ENCODE measurements at regions of chr2 and their contacts with region 1.

Region 1: GRCh38 chr2:128090945-128091725 is at the start of gene UGGT1:
- DNase-seq: peak; percentile 87 to 98 (median 94)
- ATAC-seq: peak; percentile 97
- H3K4me3 ChIP-seq: peak within 1 kb of the TSS; percentile 86 to 94
- H3K4me3 Mint-ChIP-seq: peak within 1 kb of the TSS; percentile 90
- H3K27ac ChIP-seq: peak within 1 kb of the TSS; percentile 60 to 89
- H3K27ac Mint-ChIP-seq: peak within 1 kb of the TSS; percentile 95
- H3K4me1 ChIP-seq: peaks cover 5% of the 10 kb centered on the region
- H3K4me1 Mint-ChIP-seq: peaks cover 49% of the 10 kb centered on the region
- H3K27me3 ChIP-seq: no peaks in the 10 kb centered on the region
- H3K27me3 Mint-ChIP-seq: no peaks in the 10 kb centered on the region
- CTCF ChIP-seq: no peak
- total RNA-seq, gene UGGT1: 25.6 to 25.9 TPM

Region 2: DNA sequence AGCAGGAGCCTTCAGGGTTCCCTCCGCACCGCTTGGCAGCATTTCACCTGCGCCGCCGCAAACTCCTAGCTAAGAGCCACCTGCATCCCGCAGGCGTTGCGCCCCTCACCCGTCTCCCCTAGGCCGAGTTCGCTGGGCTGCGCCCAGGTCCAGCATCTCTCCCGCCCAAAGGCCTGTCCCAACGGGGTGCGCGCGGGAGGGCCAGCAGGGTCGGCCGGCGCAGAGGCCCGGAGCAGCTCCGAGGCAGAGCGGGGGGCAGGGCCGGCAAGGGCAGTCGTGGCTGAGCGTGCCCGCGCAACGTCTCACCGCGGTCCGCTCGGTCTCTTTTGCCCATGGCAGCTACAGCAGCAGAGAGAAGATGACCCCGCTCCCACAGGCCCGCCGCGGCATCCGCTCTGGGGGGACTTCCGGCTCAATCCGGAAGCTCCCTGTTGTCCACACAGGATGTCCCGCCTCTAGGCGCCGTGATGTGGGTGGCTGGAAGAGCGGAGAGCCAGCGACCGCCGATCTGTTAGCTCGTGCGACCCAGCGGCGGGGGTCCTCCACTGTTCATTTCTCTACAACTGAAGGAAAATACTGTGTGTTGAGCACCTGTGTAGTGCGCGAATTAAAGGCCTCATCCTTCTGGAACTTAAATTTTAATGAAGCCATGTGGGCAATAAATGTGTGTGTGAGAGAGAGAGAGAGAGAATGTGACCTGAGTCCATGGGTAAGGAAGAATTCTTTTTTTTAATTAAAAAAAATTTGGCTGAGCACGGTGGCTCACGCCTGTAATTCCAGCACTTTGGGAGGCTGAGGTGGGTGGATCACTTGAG is 797.2 kb before region 1 on chr2 and contains the start of gene ERCC3:
- CTCF ChIA-PET with region 1: no interaction called
- POLR2A ChIA-PET with region 1: no interaction called
- intact Hi-C with region 1: loop called in 1 of 2 experiments (anchors 1 kb)
- DNase-seq: peak; percentile 56 to 90 (median 83)
- ATAC-seq: peak; percentile 91
- H3K4me3 ChIP-seq: peak within 1 kb of the TSS; percentile 75 to 91
- H3K4me3 Mint-ChIP-seq: peak within 1 kb of the TSS; percentile 94
- H3K27ac ChIP-seq: peak within 1 kb of the TSS; percentile 74 to 76
- H3K27ac Mint-ChIP-seq: peak within 1 kb of the TSS; percentile 91
- H3K4me1 ChIP-seq: peaks cover 13% of the 10 kb centered on the region
- H3K4me1 Mint-ChIP-seq: peaks cover 45% of the 10 kb centered on the region
- H3K27me3 ChIP-seq: no peaks in the 10 kb centered on the region
- H3K27me3 Mint-ChIP-seq: no peaks in the 10 kb centered on the region
- CTCF ChIP-seq: no peak
- total RNA-seq, gene ERCC3: 43.2 to 46.4 TPM

Region 3: GRCh38 chr2:127857265-127857808 is 233.8 kb before region 1 on chr2:
- CTCF ChIA-PET with region 1: no interaction called
- POLR2A ChIA-PET with region 1: no interaction called
- intact Hi-C with region 1: loop called in 1 of 2 experiments (anchors 5 kb)
- DNase-seq: peak in 3 of 9 experiments; percentile 11 to 44 (median 22)
- ATAC-seq: no peak
- H3K4me3 ChIP-seq: peak overlapping the region; percentile 83 to 94
- H3K4me3 Mint-ChIP-seq: peak overlapping the region; percentile 90
- H3K27ac ChIP-seq: peak overlapping the region; percentile 76 to 82
- H3K27ac Mint-ChIP-seq: peak overlapping the region; percentile 85
- H3K4me1 ChIP-seq: peaks cover 28% of the 10 kb centered on the region
- H3K4me1 Mint-ChIP-seq: peaks cover 51% of the 10 kb centered on the region
- H3K27me3 ChIP-seq: no peaks in the 10 kb centered on the region
- H3K27me3 Mint-ChIP-seq: no peaks in the 10 kb centered on the region
- CTCF ChIP-seq: no peak

Region 4: DNA sequence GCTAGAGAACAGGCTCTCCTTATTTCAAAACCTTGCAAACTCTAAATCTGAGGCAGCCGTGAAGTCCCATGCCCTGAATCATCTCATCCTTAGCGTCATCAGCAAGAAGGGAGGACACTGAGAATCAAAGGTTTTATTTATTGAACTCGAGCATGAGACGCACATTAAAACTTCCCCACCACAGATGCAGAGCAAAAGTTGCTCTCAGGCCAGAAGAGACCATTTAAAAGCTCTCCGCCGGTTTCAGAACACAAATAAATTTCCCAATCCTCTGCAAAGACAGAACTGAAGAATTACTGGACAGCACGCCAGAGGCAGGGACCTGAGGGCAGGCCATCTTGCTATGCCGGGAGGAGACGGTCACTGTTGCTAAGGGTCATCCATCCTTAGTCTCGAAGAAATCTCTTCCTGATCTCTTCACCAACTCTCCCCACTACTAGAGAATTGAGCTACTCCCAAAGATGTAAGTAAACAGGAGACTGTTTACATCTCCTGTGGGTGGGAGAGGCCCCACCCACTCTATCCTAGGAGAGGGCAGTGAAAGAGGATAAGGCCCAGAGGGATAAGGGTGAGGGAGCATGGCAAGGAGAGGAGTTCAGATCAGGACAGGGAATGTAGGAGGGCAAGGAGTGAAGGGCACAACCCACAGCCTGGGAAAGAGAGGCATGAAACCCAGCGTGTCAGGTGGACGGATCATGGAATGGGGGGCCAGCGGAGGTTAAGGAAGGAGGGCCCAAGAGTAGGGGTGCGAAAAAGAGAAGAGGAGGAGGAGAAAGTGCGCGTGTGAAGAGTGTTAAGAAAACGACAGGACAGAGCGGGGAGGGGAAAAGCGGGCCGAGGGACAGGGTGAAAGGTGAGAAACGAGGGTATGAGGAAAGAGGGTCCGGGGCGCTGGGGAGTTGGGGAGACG is 206.4 kb before region 1 on chr2:
- CTCF ChIA-PET with region 1: no interaction called
- POLR2A ChIA-PET with region 1: interaction called, 12 read pairs
- intact Hi-C with region 1: loop called (anchors 2 to 5 kb)
- DNase-seq: peak in 1 of 9 experiments; percentile 9
- ATAC-seq: no peak
- H3K4me3 ChIP-seq: peak overlapping the region; percentile 38
- H3K4me3 Mint-ChIP-seq: peak overlapping the region; percentile 86
- H3K27ac ChIP-seq: no peak overlapping the region
- H3K27ac Mint-ChIP-seq: peak overlapping the region; percentile 87
- H3K4me1 ChIP-seq: peaks cover 22% of the 10 kb centered on the region
- H3K4me1 Mint-ChIP-seq: peaks cover 66% of the 10 kb centered on the region
- H3K27me3 ChIP-seq: no peaks in the 10 kb centered on the region
- H3K27me3 Mint-ChIP-seq: no peaks in the 10 kb centered on the region
- CTCF ChIP-seq: no peak

Region 5: GRCh38 chr2:128016620-128017019 is 74.5 kb before region 1 on chr2:
- CTCF ChIA-PET with region 1: no interaction called
- POLR2A ChIA-PET with region 1: no interaction called
- intact Hi-C with region 1: no loop called
- DNase-seq: no peak
- ATAC-seq: no peak
- H3K4me3 ChIP-seq: no peak overlapping the region
- H3K4me3 Mint-ChIP-seq: no peak overlapping the region
- H3K27ac ChIP-seq: no peak overlapping the region
- H3K27ac Mint-ChIP-seq: no peak overlapping the region
- H3K4me1 ChIP-seq: no peaks in the 10 kb centered on the region
- H3K4me1 Mint-ChIP-seq: peaks cover 2% of the 10 kb centered on the region
- H3K27me3 ChIP-seq: no peaks in the 10 kb centered on the region
- H3K27me3 Mint-ChIP-seq: no peaks in the 10 kb centered on the region
- CTCF ChIP-seq: no peak

Region 6: DNA sequence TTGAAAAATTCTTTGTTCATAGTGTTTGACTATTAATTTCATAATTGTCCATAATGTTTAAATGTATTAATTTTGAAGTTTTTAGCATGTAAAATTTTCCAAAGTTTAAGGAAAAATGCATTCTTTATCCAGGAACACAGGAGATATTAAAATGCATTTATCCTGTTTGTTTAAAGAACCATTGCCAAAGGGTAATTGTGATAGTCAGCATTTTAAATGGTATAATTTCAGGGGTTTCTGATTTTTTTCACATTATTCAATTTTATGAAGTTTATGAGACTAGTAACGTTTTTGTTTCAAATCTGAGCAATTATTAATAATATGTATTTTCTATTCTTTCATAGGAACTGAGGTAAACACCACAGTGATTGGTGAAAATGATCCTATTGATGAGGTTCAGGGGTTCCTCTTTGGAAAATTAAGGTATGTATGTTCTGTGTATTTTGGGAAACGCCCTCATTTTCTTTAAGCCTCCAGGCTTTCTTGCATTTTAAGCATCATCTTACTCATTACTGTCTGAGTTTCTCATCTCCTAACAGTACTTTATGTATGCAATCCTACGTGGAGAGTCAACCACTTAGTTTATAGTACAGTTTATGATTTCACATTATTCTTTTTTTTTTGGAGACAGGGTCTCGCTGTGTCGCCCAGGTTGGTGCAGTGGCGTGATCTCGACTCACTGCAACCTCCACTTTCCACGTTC is 24.9 kb after region 1 on chr2:
- CTCF ChIA-PET with region 1: no interaction called
- POLR2A ChIA-PET with region 1: no interaction called
- intact Hi-C with region 1: no loop called
- DNase-seq: no peak
- ATAC-seq: no peak
- H3K4me3 ChIP-seq: no peak overlapping the region
- H3K4me3 Mint-ChIP-seq: no peak overlapping the region
- H3K27ac ChIP-seq: no peak overlapping the region
- H3K27ac Mint-ChIP-seq: no peak overlapping the region
- H3K4me1 ChIP-seq: no peaks in the 10 kb centered on the region
- H3K4me1 Mint-ChIP-seq: no peaks in the 10 kb centered on the region
- H3K27me3 ChIP-seq: no peaks in the 10 kb centered on the region
- H3K27me3 Mint-ChIP-seq: no peaks in the 10 kb centered on the region
- CTCF ChIP-seq: no peak

Region 7: GRCh38 chr2:128232965-128233789 is 142.0 kb after region 1 on chr2:
- CTCF ChIA-PET with region 1: no interaction called
- POLR2A ChIA-PET with region 1: no interaction called
- intact Hi-C with region 1: loop called in 1 of 2 experiments (anchors 1 kb)
- DNase-seq: peak; percentile 69 to 91 (median 83)
- ATAC-seq: peak; percentile 97
- H3K4me3 ChIP-seq: peak overlapping the region; percentile 61 to 77
- H3K4me3 Mint-ChIP-seq: peak overlapping the region; percentile 91
- H3K27ac ChIP-seq: peak overlapping the region in 1 of 2 experiments; percentile 42
- H3K27ac Mint-ChIP-seq: peak overlapping the region; percentile 69
- H3K4me1 ChIP-seq: peaks cover 10% of the 10 kb centered on the region
- H3K4me1 Mint-ChIP-seq: peaks cover 3% of the 10 kb centered on the region
- H3K27me3 ChIP-seq: peaks cover 0 to 8% of the 10 kb centered on the region in 2 experiments
- H3K27me3 Mint-ChIP-seq: peaks cover 6% of the 10 kb centered on the region
- CTCF ChIP-seq: peak; percentile 88

Region 8: DNA sequence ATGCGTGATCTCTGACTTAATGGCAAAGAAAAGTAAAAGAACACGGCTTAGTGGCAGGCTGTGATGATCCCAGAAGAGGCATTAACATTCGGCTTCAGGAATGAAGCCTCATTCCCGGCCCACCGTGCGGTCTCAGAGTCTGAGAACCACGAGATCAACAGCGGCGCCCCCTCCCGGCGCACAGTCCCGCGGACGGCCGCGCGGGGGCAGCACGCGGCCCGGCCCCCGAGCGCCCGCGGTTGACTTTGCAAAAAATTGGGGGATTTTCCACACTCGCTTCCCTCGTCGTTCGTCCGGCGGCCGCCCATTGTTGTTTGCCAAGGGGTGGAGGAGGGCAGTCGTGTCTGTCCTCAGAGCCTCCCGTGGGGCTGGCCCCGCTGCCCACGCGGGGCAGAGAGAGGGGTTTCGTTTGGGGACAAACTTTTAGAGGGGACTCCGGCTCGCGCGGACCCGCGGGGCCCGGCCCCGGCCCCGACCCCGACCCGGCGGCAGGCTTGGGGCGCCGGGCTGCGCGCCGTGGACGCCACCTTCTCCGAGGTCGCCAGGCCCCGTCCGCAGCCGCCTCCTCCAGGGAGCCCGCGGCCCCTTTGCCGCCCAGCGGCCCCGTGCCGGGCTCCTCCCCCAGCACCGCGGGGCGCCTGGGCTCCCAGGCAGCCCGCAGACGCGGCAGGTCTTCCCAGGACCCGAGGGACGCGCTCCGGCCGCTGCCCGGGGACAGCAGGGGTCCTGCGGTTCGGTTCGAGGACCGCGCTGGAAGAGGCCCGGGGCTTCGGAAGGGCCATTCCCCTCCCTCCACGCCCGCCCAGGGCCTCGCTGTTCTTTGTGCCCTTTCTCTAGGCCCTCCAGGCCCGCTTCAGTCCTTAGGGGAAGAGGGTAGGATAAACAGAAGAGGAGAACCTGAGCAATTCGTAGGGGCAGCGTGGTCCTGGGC is 230.9 kb after region 1 on chr2:
- CTCF ChIA-PET with region 1: no interaction called
- POLR2A ChIA-PET with region 1: no interaction called
- intact Hi-C with region 1: loop called in 1 of 2 experiments (anchors 5 kb)
- DNase-seq: peak; percentile 66 to 89 (median 80)
- ATAC-seq: peak; percentile 68
- H3K4me3 ChIP-seq: peak overlapping the region; percentile 48 to 76
- H3K4me3 Mint-ChIP-seq: peak overlapping the region; percentile 74
- H3K27ac ChIP-seq: peak overlapping the region in 1 of 2 experiments; percentile 35
- H3K27ac Mint-ChIP-seq: no peak overlapping the region
- H3K4me1 ChIP-seq: peaks cover 15% of the 10 kb centered on the region
- H3K4me1 Mint-ChIP-seq: peaks cover 14% of the 10 kb centered on the region
- H3K27me3 ChIP-seq: peaks cover 0 to 3% of the 10 kb centered on the region in 2 experiments
- H3K27me3 Mint-ChIP-seq: no peaks in the 10 kb centered on the region
- CTCF ChIP-seq: peak; percentile 94

Region 9: DNA sequence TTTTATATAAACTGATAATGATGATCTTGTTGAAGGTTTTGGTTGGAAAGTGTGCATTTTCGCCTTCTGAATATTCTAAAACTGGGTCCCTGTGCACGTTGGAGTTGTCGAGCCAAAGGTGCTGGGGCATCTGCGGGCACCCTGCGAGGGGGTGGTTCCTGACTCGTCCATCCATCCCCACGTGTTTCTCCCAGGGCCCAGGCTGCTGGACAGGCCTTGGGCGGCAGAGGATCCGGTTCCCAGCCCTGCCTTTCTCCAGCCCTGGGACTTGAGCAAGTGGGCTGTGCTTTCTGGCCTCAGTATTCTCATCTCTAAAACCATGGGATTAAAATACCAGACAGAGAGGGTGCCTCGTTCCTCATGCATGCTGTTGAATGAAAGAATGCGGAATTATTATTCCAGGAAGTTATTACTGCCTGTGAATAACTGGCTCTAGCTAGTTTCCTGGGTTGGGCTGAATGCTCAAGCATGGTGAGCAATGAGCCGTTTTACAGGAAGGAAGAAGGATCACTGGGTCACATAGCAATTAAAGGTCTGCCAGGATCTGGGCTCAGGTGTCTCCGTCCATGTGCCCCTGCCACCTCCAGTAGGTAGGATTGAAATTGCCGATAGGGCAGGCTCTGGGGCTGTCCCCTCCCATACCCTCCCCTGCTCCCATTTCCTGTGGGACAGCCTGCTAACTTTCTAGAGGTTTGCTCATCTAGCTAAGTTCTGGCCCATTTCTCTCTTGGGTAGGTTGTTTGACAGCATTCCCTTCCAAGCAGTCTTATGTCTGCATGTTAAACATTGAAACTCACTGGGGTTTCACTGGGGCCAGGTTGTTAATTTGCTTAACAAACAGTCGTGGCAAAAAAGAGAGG is 304.7 kb after region 1 on chr2:
- CTCF ChIA-PET with region 1: no interaction called
- POLR2A ChIA-PET with region 1: no interaction called
- intact Hi-C with region 1: no loop called
- DNase-seq: no peak
- ATAC-seq: no peak
- H3K4me3 ChIP-seq: no peak overlapping the region
- H3K4me3 Mint-ChIP-seq: no peak overlapping the region
- H3K27ac ChIP-seq: no peak overlapping the region
- H3K27ac Mint-ChIP-seq: no peak overlapping the region
- H3K4me1 ChIP-seq: no peaks in the 10 kb centered on the region
- H3K4me1 Mint-ChIP-seq: no peaks in the 10 kb centered on the region
- H3K27me3 ChIP-seq: no peaks in the 10 kb centered on the region
- H3K27me3 Mint-ChIP-seq: no peaks in the 10 kb centered on the region
- CTCF ChIP-seq: no peak

Region 10: DNA sequence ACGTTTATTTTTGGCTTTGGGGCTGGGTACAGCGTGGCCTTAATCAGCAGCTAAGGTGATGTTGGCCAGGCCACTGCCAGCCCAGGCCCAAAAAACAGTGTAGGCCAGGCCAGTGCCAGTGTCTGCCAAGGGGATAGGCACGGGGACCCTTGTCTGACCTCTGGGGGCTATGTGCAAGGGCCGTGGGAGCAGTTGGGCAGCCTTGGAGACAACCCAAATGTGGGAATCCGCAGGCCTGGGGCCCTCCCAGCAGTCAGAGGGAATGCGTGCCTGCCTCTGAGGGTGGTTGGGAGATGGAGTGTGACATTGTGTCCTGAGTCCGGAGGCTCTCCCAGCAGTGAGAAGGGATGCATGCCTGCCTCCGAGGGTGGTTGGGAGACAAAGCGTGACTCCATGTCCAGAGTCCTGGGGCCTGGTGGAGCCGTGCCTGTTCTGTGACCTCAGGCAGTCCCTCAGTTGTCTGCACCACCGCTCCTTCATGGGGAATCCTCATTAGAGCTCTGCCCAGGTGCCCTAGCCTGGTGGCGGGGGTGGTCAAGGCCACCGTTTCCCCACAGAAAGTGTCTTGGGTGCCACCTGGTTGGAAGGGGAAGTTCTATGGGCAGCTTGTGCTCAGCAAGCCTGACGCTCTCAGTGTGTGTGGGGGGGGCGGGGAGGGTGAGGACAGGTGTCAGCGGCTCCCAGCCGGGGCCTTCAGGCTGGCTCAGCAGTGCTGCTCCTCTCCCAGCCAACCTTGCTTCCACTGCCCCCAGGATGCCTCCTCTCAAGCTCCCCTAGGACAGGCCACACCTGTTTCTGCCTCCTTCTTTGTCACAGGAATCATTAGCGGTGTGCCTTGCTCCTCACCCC is 412.9 kb after region 1 on chr2:
- CTCF ChIA-PET with region 1: no interaction called
- POLR2A ChIA-PET with region 1: no interaction called
- intact Hi-C with region 1: no loop called
- DNase-seq: peak in 2 of 9 experiments; percentile 16 to 44
- ATAC-seq: no peak
- H3K4me3 ChIP-seq: no peak overlapping the region
- H3K4me3 Mint-ChIP-seq: no peak overlapping the region
- H3K27ac ChIP-seq: no peak overlapping the region
- H3K27ac Mint-ChIP-seq: no peak overlapping the region
- H3K4me1 ChIP-seq: no peaks in the 10 kb centered on the region
- H3K4me1 Mint-ChIP-seq: no peaks in the 10 kb centered on the region
- H3K27me3 ChIP-seq: no peaks in the 10 kb centered on the region
- H3K27me3 Mint-ChIP-seq: no peaks in the 10 kb centered on the region
- CTCF ChIP-seq: no peak